ENCODE measurements at regions of chr10 and their contacts with region 1.

Region 1: DNA sequence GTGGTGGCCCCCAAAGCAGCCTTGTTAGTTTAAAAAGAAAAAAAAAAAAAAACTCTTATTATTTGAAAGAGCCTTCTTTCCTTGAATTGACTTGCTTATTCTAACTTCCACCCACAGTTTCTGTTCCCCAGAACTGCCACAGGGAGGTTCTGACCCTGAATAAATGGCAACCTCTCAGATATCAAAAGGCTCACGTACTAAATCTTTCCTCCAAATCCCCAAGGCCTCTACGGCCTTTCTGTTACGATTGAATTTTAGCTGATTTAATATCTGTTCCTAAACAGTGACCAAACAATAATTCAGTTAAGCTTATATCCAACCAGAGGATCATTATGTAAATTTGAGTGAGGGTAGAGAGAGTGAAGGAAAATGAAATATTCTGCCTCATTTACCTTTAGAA is 482.8 kb downstream of the GFRA1 start:
- DNase-seq: no peak
- ATAC-seq: no peak
- H3K4me3 ChIP-seq: no peak overlapping the region
- H3K27ac ChIP-seq: no peak overlapping the region
- H3K4me1 ChIP-seq: no peaks in the 10 kb centered on the region
- H3K27me3 ChIP-seq: no peaks in the 10 kb centered on the region
- CTCF ChIP-seq: no peak

Region 2: DNA sequence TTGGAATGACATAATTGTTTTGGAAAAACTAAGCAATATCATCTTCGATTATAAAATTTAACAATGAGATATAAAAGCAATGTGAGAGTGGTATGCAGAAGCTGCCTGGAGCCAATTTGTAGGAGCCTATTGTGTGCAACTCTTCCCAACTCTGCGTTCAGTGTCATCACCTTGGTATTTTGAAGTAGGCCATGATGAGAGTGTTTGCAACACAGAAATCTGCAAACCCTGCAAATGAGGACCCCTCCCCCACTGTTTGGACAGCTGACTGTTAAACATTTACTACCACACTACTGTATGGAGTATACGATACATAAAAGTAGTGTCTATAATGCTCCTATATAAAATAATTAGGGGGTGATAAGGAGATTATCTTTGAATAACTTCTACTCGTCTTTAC is 165.8 kb before region 1 on chr10:
- intact Hi-C with region 1: no loop called
- DNase-seq: no peak
- ATAC-seq: no peak
- H3K4me3 ChIP-seq: no peak overlapping the region
- H3K27ac ChIP-seq: no peak overlapping the region
- H3K4me1 ChIP-seq: no peaks in the 10 kb centered on the region
- H3K27me3 ChIP-seq: no peaks in the 10 kb centered on the region
- CTCF ChIP-seq: no peak

Region 3: DNA sequence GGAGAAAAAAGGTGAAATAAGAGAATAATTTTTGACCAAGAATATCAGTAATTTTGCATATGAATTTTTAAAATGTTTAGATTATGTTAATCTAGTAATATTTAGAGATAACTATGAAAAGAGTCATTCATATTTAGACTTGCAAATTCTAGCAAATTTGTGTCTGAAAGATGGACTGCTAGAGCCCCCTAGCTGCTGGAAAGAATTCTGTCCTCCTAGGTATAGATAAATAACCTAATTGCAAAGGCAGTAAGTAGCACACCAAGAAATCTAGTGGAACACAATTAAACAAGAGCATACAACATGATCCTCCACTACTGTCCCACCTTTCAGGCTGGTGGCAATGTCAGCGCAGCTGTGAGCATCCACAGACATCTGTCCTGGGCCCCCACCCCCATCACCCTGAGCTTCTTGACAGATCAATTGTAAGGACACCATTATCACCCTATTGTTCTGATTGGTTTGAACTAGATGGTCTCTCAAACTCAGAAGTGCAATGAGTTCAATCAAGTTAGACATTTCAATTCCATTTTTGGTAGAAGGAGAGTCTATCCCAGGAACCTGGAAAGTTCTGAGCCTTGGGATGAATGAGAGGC is 497.8 kb after region 1 on chr10:
- intact Hi-C with region 1: loop called (anchors 10 kb)
- DNase-seq: no peak
- ATAC-seq: peak; percentile 46
- H3K4me3 ChIP-seq: no peak overlapping the region
- H3K27ac ChIP-seq: no peak overlapping the region
- H3K4me1 ChIP-seq: no peaks in the 10 kb centered on the region
- H3K27me3 ChIP-seq: peaks cover 5% of the 10 kb centered on the region
- CTCF ChIP-seq: peak; percentile 67